ENCODE measurements at regions of chr20 and their contacts with region 1.

Region 1: DNA sequence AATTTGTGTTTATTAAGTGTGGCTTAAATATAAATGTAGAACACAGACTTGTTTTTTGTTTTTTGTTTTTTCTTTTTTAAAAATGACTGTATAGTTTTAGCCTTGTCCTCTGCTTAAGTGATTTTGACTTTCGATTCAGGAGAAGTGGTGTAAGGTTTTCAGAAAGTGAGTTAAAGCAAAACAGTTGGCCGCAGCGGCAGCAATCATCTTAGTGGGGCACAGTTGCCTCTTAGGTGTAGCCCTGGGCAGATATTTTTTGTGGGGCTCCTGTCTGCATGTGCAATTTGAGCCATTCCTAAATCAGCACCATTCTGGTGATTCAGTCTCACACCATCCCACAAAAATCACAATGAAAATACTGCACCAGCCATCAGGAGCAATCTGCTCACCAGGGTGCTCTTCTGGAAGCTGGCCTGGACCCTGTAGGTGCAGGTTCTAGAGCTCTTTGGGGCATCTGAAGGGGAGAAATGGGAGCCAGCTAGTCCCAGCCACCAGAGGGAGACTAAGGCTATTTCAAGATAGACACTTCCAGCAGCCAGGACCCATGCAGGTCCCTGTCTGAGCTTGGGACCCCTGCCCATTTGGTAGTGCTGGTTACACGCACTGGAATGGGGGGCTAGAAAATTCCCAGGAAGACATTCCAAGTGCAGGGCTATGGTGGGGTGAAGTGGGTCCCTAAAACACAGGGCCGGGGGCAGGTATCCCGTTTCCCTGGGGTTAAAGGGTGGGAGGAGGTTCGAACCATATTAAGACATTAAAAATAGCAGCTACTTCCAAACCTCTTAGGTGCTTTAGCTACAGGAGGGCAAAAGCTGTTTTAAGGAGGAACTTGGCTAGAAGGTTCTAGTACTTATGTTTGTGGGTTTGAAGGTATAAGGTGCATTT is 156.6 kb downstream of the NFATC2 start:
- DNase-seq: peak; percentile 53
- ATAC-seq: peak; percentile 58
- H3K4me3 Mint-ChIP-seq: no peak overlapping the region
- H3K27ac Mint-ChIP-seq: no peak overlapping the region
- H3K4me1 Mint-ChIP-seq: peaks cover 56% of the 10 kb centered on the region
- H3K27me3 Mint-ChIP-seq: 0 out of 2 replicates have a peak, but pooled peaks cover 2% of the 10 kb centered on the region
- CTCF ChIP-seq: peak; percentile 46; the same call in 1 of the 2 replicates

Region 2: DNA sequence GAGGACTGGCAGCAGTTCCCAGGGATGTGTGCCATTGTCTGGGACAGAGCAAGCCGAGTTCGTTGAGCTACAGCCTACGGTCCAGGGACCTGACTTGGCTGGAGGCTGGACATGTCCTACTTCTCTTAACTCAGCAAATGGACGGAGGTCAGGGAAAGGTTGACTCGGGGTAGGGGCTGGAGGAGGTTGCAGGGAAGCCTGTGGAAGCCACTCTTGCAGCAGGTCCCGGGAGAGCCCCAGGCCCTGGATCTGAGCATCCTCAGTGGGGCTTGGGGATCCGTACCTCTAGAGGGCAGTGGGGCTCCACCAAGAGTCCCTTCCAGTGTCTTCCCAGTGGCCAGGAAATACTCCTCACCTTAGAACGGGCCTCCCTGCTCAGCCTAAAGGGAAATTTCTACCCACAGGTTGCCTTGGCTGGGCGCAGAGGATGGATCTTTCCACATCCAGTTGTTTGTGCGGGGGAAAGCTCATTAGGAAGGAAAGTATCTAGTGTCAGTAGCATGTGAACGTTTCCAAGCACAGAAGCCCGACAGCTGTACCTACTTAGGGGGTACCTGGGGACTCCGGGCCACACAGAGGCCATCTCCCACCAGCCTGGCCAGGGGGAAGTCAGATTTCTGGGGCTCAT is 13.6 kb before region 1 on chr20:
- CTCF ChIA-PET with region 1: interaction called, 10 read pairs
- POLR2A ChIA-PET with region 1: no interaction called
- DNase-seq: peak; percentile 84
- ATAC-seq: peak; percentile 99
- H3K4me3 Mint-ChIP-seq: no peak overlapping the region
- H3K27ac Mint-ChIP-seq: 0 out of 2 replicates have a peak overlapping the region, but pooled peaks have one; percentile 36
- H3K4me1 Mint-ChIP-seq: peaks cover 10% of the 10 kb centered on the region
- H3K27me3 Mint-ChIP-seq: no peaks in the 10 kb centered on the region
- CTCF ChIP-seq: peak; percentile 44

Region 3: DNA sequence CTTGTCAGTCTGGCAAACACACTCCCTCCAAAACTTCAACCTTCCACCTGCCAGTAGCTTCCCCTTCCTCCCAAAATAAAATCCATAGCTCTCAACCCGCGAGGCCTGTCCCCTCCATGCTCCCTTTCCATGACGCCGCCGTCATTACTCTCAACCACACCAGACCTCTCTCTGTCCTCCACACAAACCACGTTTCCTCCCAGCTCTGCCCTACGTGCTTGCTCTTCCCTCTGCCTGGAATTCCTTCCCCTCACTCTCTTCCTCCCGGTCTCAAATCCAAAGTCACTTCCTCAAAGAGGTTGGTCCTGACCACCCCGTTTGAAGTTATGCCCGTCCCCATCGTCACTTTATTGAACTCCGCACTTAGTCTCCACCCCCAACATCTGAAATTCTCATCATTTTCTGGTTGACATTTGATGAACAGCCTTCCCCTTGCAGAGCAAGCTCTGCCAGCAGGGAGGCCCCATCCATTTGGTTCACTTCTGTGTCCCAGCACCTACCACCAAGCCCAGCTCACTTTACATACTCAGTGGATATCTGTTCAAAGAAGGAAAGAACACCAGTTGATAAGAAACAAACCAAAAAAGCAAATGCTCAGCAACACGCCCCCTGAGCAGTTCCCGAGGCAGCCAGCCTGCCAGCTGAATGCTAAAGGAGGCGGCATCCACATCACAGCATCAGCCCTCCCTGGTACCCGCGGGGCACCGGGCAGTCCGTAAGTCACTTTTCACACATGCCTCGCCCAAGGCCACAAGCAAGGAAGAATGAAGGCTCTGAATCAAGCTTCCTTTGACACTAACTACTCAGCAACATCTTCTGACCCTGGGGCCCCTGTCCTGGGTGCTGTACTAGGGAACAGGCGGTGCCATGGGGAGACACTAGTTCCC is 31.6 kb after region 1 on chr20:
- CTCF ChIA-PET with region 1: interaction called, 24 read pairs
- POLR2A ChIA-PET with region 1: no interaction called
- DNase-seq: no peak
- ATAC-seq: no peak
- H3K4me3 Mint-ChIP-seq: no peak overlapping the region
- H3K27ac Mint-ChIP-seq: no peak overlapping the region
- H3K4me1 Mint-ChIP-seq: peaks cover 15% of the 10 kb centered on the region
- H3K27me3 Mint-ChIP-seq: peaks cover 3% of the 10 kb centered on the region; the same call in 1 of the 2 replicates
- CTCF ChIP-seq: no peak

Region 4: DNA sequence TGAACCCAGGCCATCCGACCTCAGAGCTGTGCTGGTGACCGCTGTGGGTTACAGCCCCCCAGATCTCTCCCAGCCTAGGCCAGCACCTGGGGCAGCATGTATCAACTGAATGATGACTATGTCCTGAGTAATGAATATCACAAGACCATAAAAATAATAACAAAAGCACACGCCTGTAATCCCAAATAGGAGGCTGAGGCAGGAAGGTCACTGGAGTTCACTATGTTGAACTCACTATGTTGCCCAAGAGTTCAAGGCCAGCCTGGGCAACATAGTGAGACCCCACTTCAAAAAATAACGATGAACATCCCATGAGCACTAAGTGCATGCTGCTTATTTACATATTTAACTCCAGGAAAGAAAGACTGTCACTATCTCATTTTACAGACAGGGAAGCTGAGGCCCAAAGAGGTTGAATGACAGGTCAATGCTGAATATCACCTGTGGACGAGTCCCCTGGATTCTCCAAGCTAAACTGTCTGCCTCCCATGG is 64.4 kb after region 1 on chr20:
- CTCF ChIA-PET with region 1: interaction called, 17 read pairs
- POLR2A ChIA-PET with region 1: no interaction called
- DNase-seq: no peak
- ATAC-seq: no peak
- H3K4me3 Mint-ChIP-seq: no peak overlapping the region
- H3K27ac Mint-ChIP-seq: no peak overlapping the region
- H3K4me1 Mint-ChIP-seq: peaks cover 7% of the 10 kb centered on the region; the same call in 1 of the 2 replicates
- H3K27me3 Mint-ChIP-seq: no peaks in the 10 kb centered on the region
- CTCF ChIP-seq: no peak

Region 5: GRCh38 chr20:51562332-51563155 is 176.7 kb after region 1 on chr20:
- CTCF ChIA-PET with region 1: interaction called, 39 read pairs
- POLR2A ChIA-PET with region 1: no interaction called
- DNase-seq: peak; percentile 63
- ATAC-seq: peak; percentile 73
- H3K4me3 Mint-ChIP-seq: peak overlapping the region; percentile 77
- H3K27ac Mint-ChIP-seq: no peak overlapping the region
- H3K4me1 Mint-ChIP-seq: peaks cover 25% of the 10 kb centered on the region
- H3K27me3 Mint-ChIP-seq: peaks cover 60% of the 10 kb centered on the region
- CTCF ChIP-seq: no peak

Region 6: DNA sequence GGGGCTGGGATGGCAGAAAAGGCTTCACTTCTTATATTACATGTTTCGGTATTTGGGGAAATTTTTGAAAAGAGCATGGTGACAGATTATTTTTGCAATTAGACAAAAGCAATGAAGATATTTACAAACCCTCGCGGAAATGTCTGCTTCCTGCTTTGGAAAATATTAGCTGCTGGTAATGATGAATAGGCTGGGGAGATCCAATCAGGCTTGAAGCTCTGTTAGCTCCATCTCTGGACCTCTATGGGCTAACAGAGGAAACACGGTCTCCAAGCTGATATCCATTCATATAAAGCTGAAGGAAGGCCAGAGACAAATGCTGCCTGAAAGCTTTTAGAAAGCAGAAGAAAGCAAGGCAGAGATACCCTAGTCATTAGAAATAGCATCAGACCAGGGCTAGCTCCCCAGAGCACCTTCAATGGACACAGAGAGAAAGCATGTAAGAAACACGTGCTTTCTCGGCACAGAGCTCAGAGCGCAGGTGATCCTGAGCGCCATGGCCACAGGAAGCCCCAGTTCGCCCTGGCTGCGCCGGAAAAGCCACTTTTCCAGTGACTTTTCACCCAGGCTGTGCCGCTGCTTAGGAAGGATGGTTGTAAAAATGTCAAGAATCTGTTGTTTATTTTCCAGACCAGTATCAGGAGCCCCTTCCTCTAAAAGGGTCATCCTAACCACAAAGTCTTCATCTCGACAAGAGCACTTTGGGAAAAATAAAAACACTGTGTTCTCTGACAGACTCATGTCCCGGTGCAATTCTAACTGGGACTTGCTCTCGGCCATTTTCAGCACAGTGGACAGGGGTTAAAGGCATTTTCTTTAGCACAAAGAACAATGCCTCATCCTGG is 225.1 kb after region 1 on chr20:
- CTCF ChIA-PET with region 1: interaction called, 21 read pairs
- POLR2A ChIA-PET with region 1: no interaction called
- DNase-seq: no peak
- ATAC-seq: no peak
- H3K4me3 Mint-ChIP-seq: no peak overlapping the region
- H3K27ac Mint-ChIP-seq: no peak overlapping the region
- H3K4me1 Mint-ChIP-seq: 0 out of 2 replicates have a peak, but pooled peaks cover 5% of the 10 kb centered on the region
- H3K27me3 Mint-ChIP-seq: no peaks in the 10 kb centered on the region
- CTCF ChIP-seq: no peak

Region 7: GRCh38 chr20:51624157-51624731 is 238.4 kb after region 1 on chr20:
- CTCF ChIA-PET with region 1: interaction called, 16 read pairs
- POLR2A ChIA-PET with region 1: no interaction called
- DNase-seq: peak; percentile 84
- ATAC-seq: peak; percentile 92
- H3K4me3 Mint-ChIP-seq: no peak overlapping the region
- H3K27ac Mint-ChIP-seq: peak overlapping the region; percentile 84; the same call in 1 of the 2 replicates
- H3K4me1 Mint-ChIP-seq: peaks cover 9% of the 10 kb centered on the region
- H3K27me3 Mint-ChIP-seq: no peaks in the 10 kb centered on the region
- CTCF ChIP-seq: peak; percentile 76